Panc1 (cell line): ENCODE measurements at regions of chr19 and their contacts with region 1.

Region 1: DNA sequence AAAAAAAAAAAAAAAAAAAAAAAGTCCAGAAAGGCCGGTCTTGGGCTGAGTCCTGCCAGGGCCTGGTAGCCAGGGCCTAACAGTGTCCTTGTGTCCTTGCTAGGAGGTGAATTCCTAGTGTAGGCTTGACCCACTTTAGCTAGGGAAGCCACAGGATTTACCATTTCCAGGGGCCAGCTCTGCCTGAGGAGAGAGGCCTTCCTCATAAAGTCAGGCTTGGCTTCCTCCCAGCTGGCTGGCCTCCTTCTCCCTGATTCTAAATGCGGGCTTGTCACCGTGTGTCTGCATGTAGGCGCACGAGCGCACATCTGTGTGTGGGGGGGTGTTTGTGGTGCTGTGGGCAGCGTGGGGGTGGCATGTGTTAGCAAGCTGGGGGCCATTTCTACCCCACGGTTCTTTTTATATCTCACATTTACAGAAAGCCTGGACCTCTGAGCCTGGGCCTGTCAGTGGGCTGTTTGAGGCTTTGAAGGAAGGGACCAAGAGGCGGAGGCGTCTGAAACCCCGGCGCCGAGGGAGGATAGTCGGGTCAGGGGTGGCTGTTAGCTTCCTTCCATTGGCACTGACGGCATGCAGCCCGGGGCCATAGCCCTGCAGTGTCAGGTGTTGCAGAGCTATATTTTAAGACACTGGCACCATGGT is 31.7 kb downstream of the IER2 start:
- DNase-seq: no peak
- ATAC-seq: peak; percentile 85
- H3K4me3 ChIP-seq: no peak overlapping the region
- H3K27ac ChIP-seq: peak overlapping the region; percentile 76
- H3K4me1 ChIP-seq: peaks cover 14% of the 10 kb centered on the region
- H3K27me3 ChIP-seq: no peaks in the 10 kb centered on the region
- CTCF ChIP-seq: no peak

Region 2: GRCh38 chr19:12938234-12939025 is 243.4 kb before region 1 on chr19 and contains the start of gene CALR:
- CTCF ChIA-PET with region 1: no interaction called
- POLR2A ChIA-PET with region 1: interaction called, 19 read pairs
- in situ Hi-C with region 1: no loop called
- intact Hi-C with region 1: no loop called
- DNase-seq: peak; percentile 91
- ATAC-seq: peak; percentile 95
- H3K4me3 ChIP-seq: peak within 1 kb of the TSS; percentile 96 to 97
- H3K27ac ChIP-seq: peak within 1 kb of the TSS; percentile 93
- H3K4me1 ChIP-seq: peaks cover 23% of the 10 kb centered on the region
- H3K27me3 ChIP-seq: no peaks in the 10 kb centered on the region
- CTCF ChIP-seq: no peak
- total RNA-seq, gene CALR: 1,060 TPM

Region 3: DNA sequence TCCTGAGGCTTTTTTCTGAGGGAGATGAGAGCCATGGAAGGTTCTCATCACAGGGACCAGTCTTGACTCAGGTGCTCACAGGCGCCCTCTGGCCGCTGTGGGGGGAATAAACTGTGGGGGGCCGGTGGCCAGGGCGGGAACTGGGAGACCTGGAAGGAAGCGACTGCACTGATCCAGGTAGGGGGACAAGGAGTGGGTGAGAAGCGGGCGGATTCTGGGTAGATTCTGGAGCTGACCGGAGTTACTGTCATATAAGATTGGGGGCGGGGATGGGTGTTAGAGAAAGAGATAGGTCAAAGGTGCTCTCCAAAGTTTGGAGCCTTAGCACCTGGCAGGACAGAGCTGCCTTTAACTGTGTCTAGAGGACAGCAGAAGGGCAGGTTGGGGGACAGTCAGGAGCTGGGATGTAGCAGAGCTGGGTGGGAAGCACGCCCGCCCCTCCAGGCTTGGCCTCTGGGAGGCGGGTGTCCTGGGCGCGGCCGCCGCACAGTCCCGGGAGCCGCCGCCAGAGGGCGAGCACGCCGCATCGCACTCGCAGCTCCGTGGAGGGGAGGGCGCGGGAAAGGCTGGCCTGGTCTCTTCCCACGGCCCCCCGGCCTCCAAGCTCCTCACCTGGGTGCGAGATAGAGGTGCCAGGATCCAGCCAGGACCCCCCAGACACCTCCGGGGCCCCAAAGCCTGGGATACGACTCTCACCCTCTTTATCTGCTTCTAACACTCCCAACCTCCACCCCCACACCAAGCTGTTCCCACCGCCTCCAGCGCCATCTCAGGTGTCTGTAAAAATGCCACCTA is 216.7 kb before region 1 on chr19:
- CTCF ChIA-PET with region 1: interaction called, 13 read pairs
- POLR2A ChIA-PET with region 1: no interaction called
- in situ Hi-C with region 1: no loop called
- intact Hi-C with region 1: no loop called
- DNase-seq: peak; percentile 36
- ATAC-seq: peak; percentile 98
- H3K4me3 ChIP-seq: peak overlapping the region; percentile 49 to 79
- H3K27ac ChIP-seq: peak overlapping the region; percentile 82
- H3K4me1 ChIP-seq: peaks cover 10% of the 10 kb centered on the region
- H3K27me3 ChIP-seq: no peaks in the 10 kb centered on the region
- CTCF ChIP-seq: peak; percentile 97

Region 4: DNA sequence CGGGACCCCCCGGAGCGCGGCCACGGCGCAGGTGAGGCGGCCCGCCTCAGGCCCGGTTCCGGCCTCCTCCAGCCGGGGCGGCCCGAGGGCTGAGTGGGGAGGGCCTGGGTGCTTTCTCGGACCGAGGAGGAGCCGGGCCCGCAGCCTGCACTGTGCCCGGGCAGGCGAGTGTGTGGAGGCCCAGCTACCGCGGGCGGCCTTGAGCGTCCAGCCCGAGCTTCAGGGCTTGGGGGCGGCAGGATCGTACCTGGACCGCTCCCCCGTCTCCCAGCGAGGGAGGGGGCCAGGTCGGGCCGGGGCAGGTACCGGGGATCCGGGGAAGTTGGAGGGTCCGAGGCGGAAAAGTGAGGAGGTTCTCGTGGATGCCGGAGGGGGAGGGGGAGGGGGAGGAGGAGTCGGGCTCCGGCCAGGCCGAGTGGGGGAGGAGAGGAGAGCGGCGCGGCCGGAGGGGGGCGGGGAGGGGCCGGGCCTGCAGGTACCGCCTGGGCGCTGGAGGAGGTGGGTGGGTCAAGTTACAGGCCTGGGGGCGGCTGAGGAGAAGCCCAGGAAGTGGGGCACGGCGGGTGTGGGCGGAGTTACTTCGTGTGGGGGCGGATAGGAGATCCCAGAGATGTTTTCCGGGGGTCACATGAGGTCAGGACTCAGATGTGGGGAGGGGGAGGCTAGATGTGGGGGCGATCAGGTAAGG is 63.3 kb before region 1 on chr19:
- CTCF ChIA-PET with region 1: no interaction called
- POLR2A ChIA-PET with region 1: no interaction called
- in situ Hi-C with region 1: no loop called
- intact Hi-C with region 1: no loop called
- DNase-seq: no peak
- ATAC-seq: peak; percentile 22; the same call in 1 of the 2 replicates
- H3K4me3 ChIP-seq: peak overlapping the region; percentile 63 to 76
- H3K27ac ChIP-seq: peak overlapping the region; percentile 79
- H3K4me1 ChIP-seq: peaks cover 26% of the 10 kb centered on the region
- H3K27me3 ChIP-seq: no peaks in the 10 kb centered on the region
- CTCF ChIP-seq: no peak

Region 5: DNA sequence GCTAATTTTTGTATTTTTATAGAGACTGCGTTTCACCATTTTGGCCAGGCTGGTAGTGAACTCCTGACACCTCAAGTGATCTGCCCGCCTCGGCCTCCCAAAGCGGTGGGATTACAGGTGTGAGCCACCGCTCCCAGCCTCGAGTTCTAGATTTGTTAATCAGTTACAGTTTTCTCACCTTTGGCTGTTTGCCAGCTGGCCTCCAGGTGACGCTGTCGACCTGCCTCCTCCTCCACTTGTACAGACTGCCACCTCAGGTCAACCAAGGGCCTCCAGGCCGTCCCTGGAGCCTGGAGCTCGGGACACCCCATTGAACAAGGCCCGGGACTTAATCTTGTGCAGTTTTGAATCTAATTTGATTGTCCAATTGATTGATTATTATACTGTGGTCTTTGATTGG is 13.8 kb after region 1 on chr19:
- CTCF ChIA-PET with region 1: interaction called, 8 read pairs
- POLR2A ChIA-PET with region 1: interaction called, 7 read pairs
- in situ Hi-C with region 1: no loop called
- intact Hi-C with region 1: loop called (anchors 1 kb)
- DNase-seq: no peak
- ATAC-seq: no peak
- H3K4me3 ChIP-seq: no peak overlapping the region
- H3K27ac ChIP-seq: no peak overlapping the region
- H3K4me1 ChIP-seq: no peaks in the 10 kb centered on the region
- H3K27me3 ChIP-seq: no peaks in the 10 kb centered on the region
- CTCF ChIP-seq: no peak